PC-9 (cell line): ENCODE measurements at regions of chr6 and their contacts with region 1.

Region 1: GRCh38 chr6:52577022-52577777 is at the start of gene TRAM2:
- DNase-seq: peak; percentile 48 to 86
- H3K4me3 ChIP-seq: peak within 1 kb of the TSS; percentile 67
- H3K27ac ChIP-seq: peak within 1 kb of the TSS; percentile 83
- H3K4me1 ChIP-seq: peaks cover 34% of the 10 kb centered on the region
- H3K27me3 ChIP-seq: no peaks in the 10 kb centered on the region
- CTCF ChIP-seq: no peak
- total RNA-seq, gene TRAM2: 28.1 and 40.9 TPM in 2 replicates

Region 2: GRCh38 chr6:52475307-52475706 is 101.9 kb before region 1 on chr6:
- CTCF ChIA-PET with region 1: no interaction called
- POLR2A ChIA-PET with region 1: no interaction called
- intact Hi-C with region 1: no loop called
- DNase-seq: no peak
- H3K4me3 ChIP-seq: no peak overlapping the region
- H3K27ac ChIP-seq: no peak overlapping the region
- H3K4me1 ChIP-seq: no peaks in the 10 kb centered on the region
- H3K27me3 ChIP-seq: no peaks in the 10 kb centered on the region
- CTCF ChIP-seq: no peak

Region 3: GRCh38 chr6:52517502-52518278 is 59.5 kb before region 1 on chr6:
- CTCF ChIA-PET with region 1: no interaction called
- POLR2A ChIA-PET with region 1: no interaction called
- intact Hi-C with region 1: loop called (anchors 2 kb)
- DNase-seq: peak; percentile 71 to 76
- H3K4me3 ChIP-seq: no peak overlapping the region
- H3K27ac ChIP-seq: peak overlapping the region; percentile 42
- H3K4me1 ChIP-seq: peaks cover 42% of the 10 kb centered on the region
- H3K27me3 ChIP-seq: no peaks in the 10 kb centered on the region
- CTCF ChIP-seq: no peak